Activated CD4-positive, alpha-beta T cell treated with anti-CD3 and anti-CD28 coated beads for 36 hours (primary cell): ENCODE measurements at regions of chr14 and their contacts with region 1.

Region 1: DNA sequence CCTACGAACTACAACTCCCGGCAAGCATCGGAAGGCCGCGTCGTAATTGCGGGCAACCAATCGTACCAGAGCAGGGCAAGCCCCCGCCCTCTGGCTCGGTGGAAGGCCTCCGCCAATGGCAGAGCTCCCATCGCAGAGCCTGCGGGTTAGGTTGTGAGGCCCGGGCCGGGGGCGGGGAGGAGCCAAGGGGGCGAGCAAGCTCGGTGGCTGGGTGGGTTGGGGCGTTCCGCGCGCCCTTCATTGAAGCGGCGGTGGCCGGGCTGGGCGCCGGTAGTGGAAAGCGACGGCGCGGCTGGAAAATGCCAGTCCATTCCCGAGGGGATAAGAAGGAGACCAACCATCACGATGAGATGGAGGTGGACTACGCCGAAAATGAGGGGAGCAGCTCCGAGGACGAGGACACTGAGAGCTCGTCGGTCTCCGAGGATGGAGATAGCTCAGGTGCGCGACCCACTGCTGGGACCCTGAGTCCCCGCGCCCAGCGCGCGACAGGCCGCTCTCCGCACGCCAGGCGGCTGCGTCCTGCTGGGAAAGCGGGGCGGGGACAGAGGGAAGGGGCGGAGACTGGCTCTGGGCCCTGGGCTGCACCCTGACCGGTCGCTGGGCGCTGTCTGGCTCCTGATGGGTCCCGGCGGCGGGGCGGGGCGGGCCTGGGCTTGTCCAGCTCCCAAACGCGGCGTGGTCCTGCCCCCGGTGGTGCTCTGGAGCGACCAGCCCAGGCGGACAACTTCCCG is at the start of gene BRMS1L:
- DNase-seq: peak; percentile 99
- ATAC-seq: peak; percentile 98
- H3K4me3 Mint-ChIP-seq: peak within 1 kb of the TSS; percentile 71
- H3K27ac Mint-ChIP-seq: peak within 1 kb of the TSS; percentile 90
- H3K4me1 Mint-ChIP-seq: peaks cover 24% of the 10 kb centered on the region
- H3K27me3 Mint-ChIP-seq: no peaks in the 10 kb centered on the region
- total RNA-seq, gene BRMS1L: 5.3 to 7.8 TPM

Region 2: GRCh38 chr14:34461334-34462131 is 1364.9 kb before region 1 on chr14:
- CTCF ChIA-PET with region 1: no interaction called
- POLR2A ChIA-PET with region 1: no interaction called
- intact Hi-C with region 1: loop called in 1 of 2 experiments (anchors 1 kb)
- DNase-seq: peak; percentile 50
- ATAC-seq: peak; percentile 62
- H3K4me3 Mint-ChIP-seq: peak overlapping the region; percentile 91
- H3K27ac Mint-ChIP-seq: peak overlapping the region; percentile 85
- H3K4me1 Mint-ChIP-seq: peaks cover 19% of the 10 kb centered on the region
- H3K27me3 Mint-ChIP-seq: no peaks in the 10 kb centered on the region

Region 3: DNA sequence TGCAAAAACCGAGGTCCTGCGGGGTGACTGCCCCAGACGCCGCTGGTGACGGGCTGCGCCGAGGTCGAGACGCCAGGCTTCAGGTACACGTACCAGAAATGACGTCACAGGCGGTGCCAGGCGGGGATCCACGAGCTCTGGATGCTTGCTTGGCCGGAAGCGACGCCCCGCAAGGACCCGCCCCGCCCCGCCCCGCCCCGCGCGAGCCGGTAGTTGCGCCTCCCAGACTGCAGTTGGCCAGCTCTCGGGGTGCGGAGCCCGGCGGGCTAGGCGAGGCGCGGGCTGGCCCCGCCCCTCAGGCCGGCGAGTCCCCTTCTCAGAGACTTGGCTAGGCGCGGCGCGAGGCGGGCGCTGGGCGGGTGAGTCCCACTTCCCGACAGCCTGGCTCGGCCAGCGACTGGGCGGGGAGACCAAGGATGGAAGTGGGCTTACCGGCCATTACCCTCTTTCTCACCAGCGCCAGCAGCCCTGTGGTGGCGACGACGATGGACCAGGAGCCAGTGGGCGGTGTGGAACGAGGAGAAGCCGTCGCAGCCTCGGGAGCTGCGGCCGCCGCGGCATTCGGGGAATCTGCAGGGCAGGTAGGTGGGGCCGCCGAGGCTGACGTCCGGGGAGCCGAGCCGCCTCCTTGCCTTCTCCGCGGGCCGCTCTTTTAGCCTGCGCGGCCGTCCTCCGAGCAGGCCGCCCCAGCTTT is 780.2 kb before region 1 on chr14 and contains the start of gene FAM177A1:
- CTCF ChIA-PET with region 1: no interaction called
- POLR2A ChIA-PET with region 1: no interaction called
- intact Hi-C with region 1: loop called in 1 of 2 experiments (anchors 1 kb)
- DNase-seq: peak; percentile 100
- ATAC-seq: peak; percentile 94
- H3K4me3 Mint-ChIP-seq: peak within 1 kb of the TSS; percentile 95
- H3K27ac Mint-ChIP-seq: peak within 1 kb of the TSS; percentile 99
- H3K4me1 Mint-ChIP-seq: peaks cover 23% of the 10 kb centered on the region
- H3K27me3 Mint-ChIP-seq: no peaks in the 10 kb centered on the region
- total RNA-seq, gene FAM177A1: 35.4 to 37.2 TPM

Region 4: DNA sequence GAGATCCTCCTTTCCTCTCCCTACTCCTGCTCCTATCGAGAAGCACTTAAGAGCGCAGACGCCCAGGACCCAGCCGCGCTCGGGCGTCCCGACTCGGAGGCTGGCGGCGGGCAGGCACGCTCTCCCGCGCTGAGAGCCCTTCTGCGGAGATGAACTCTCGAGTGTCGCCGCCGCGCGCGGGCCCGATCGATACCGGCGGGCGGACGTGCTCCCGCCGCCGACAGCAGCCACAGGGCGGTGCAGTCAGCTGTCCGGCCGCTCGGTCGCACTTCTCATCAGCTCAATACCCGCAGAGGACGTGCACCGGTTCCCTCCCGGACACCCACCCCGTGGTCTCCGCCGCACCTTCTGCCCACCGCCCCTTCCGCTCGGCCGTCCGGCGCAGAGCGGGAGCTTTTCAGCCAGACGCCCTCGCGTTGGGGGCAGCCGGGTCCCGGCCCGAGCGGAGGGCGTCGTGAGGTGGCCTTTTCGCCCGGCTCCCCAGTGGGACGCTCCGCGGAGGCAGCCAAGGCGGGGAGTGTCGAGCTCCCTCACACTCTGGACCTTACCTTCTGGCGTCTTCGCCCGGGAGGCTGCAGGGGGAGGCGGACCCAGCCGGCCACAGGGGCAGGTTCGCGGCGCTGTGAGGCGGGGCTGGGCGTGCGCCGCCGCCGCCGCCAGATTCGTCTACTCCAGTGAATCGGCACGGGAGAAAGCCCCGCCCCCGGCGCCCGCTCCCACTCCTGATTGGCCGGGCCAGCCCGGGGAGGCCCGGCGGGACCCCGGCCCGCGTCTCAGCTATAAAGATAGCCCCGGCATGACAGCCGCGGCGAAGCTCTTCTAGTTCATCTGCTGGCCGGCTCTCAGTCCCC is 292.8 kb before region 1 on chr14 and contains the start of gene INSM2:
- CTCF ChIA-PET with region 1: no interaction called
- POLR2A ChIA-PET with region 1: no interaction called
- intact Hi-C with region 1: loop called in 1 of 2 experiments (anchors 5 kb)
- DNase-seq: peak; percentile 85
- ATAC-seq: peak; percentile 81
- H3K4me3 Mint-ChIP-seq: peak within 1 kb of the TSS; percentile 69
- H3K27ac Mint-ChIP-seq: no peak within 1 kb of the TSS
- H3K4me1 Mint-ChIP-seq: peaks cover 15% of the 10 kb centered on the region
- H3K27me3 Mint-ChIP-seq: peaks cover 44% of the 10 kb centered on the region
- total RNA-seq, gene INSM2: not detected

Region 5: DNA sequence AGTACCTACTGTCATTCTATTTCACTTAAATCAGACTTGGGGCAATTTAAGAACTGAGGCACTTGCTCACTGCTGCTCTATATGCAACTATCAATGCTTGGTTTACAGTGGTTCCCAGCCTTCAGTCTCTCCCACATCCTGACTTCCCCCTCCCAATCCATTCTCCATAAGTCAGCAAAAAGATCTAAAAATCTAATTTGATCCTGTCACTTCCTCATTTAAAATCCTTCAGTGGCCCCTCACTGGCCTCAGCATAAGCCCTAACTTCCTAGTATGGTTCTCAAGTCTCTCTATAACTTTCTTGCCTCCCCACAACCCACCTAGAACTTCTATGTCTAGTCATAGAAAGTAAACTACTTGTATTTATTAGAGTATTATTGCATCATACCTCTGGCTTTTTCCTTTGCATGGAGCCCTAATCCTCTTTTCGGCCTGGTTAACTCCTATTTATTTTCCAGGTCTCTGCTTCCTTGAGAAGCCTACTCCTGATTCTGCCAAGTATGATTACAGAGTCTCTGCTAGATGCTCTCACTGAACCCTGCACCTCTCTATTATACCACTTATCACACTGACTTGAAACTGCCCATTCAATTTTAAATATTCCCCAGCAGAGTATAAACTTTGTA is 147.9 kb before region 1 on chr14:
- CTCF ChIA-PET with region 1: no interaction called
- POLR2A ChIA-PET with region 1: no interaction called
- intact Hi-C with region 1: no loop called
- DNase-seq: no peak
- ATAC-seq: no peak
- H3K4me3 Mint-ChIP-seq: no peak overlapping the region
- H3K27ac Mint-ChIP-seq: no peak overlapping the region
- H3K4me1 Mint-ChIP-seq: no peaks in the 10 kb centered on the region
- H3K27me3 Mint-ChIP-seq: no peaks in the 10 kb centered on the region

Region 6: DNA sequence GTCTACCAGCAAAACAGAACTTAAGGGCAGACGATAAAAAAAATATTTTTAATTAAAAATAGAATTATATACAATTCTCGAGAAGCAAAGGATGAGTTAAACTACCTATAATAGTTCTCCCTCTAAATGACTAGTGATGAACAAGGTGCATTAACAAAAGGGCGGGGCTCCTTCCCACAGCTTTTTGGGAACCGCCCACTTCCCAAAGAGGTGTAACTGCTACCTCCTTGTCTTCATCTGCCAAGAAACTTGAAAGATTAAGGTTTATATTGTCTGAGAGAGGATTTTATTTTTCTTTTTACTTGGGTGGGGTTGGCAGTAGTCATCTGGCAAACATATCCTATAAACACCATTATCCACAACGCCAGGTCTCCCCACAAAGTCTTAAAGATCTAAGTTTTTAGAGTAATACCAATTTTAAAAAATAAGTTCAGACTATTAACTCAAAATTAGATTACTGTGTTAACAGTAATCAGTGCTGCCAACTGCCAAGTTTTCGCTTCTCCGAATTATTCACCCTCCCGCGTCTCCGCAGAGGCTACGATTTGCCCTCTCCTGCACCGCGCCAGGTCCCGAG is 18.2 kb before region 1 on chr14:
- CTCF ChIA-PET with region 1: interaction called, 10 read pairs
- POLR2A ChIA-PET with region 1: interaction called, 5 read pairs
- intact Hi-C with region 1: loop called (anchors 1 kb)
- DNase-seq: peak; percentile 54
- ATAC-seq: no peak
- H3K4me3 Mint-ChIP-seq: peak overlapping the region; percentile 95
- H3K27ac Mint-ChIP-seq: peak overlapping the region; percentile 97
- H3K4me1 Mint-ChIP-seq: peaks cover 24% of the 10 kb centered on the region
- H3K27me3 Mint-ChIP-seq: no peaks in the 10 kb centered on the region

Region 7: DNA sequence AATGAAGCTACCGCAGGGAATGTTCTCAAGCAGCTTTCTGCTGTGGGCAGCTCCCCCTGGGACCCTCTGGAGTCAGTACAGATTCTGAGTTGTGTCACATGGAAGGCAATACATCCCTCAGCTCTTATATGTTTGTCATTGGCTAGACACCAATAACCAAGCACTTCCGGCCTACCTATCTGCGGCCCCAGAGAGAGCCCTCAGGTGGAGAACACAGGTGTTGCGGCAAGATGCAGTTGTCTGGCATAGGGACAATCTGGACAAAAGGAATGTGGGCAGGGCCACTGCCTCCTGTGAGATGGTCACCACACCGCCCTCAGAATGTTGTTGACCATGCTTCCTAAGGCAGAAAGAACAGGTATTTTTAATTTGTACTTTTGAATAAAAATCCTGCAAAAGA is 118.5 kb after region 1 on chr14:
- CTCF ChIA-PET with region 1: no interaction called
- POLR2A ChIA-PET with region 1: no interaction called
- intact Hi-C with region 1: loop called in 1 of 2 experiments (anchors 5 kb)
- DNase-seq: peak; percentile 59
- ATAC-seq: peak; percentile 49
- H3K4me3 Mint-ChIP-seq: no peak overlapping the region
- H3K27ac Mint-ChIP-seq: no peak overlapping the region
- H3K4me1 Mint-ChIP-seq: peaks cover 2% of the 10 kb centered on the region
- H3K27me3 Mint-ChIP-seq: no peaks in the 10 kb centered on the region

Region 8: DNA sequence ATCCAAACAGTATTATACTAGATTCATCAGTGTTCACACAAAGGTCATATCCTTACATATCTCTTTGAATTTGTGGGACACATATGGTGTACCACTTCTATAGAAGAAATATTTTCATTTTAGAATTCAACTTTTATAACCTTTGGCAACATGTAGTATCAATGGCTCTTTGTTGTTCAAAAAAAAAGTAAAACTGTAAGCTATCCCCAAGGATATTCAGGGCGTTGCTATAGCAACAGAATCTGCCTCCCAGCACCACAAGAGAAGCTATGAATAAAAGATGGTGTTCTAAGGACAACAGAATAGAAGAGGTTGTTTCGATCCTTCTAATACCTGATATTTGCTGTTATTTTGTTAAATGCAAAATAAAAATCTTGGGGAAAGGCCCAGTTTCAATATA is 139.0 kb after region 1 on chr14:
- CTCF ChIA-PET with region 1: no interaction called
- POLR2A ChIA-PET with region 1: no interaction called
- intact Hi-C with region 1: no loop called
- DNase-seq: no peak
- ATAC-seq: no peak
- H3K4me3 Mint-ChIP-seq: no peak overlapping the region
- H3K27ac Mint-ChIP-seq: no peak overlapping the region
- H3K4me1 Mint-ChIP-seq: no peaks in the 10 kb centered on the region
- H3K27me3 Mint-ChIP-seq: peaks cover 2% of the 10 kb centered on the region

Region 9: DNA sequence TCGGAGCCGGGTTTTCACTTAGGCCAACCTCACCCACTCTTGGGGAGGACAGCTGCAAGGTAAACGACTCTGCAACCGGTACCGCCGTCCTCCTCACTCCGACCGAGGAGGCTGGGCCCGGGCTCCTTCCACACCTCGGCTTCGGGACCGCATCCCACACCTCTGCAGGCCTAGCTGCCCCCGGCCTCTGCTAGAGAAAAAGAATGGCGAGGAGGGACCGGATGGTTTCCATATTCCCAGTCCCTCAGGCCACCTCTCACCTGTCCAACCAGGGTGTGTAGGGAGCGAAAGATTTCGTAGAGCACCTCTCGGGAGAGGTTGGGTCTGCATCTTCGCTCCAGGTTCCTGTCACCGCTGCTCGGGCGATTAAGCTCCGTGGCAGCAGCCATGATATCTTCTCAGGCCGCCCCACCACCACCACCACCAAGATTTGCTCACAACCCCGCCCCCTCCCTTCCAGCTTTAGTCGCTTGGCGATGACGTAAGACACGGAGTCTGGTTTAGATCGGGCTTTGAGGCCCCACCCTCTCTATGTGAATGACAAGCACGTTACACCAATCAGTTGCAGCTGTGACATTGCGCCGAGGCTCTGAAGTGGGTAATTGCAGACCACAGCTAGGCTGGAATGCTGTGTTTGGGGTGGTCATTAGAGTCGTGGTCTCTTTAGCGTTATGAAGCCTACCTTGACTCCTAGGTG is 494.0 kb after region 1 on chr14 and contains the start of gene MBIP:
- CTCF ChIA-PET with region 1: interaction called, 5 read pairs
- POLR2A ChIA-PET with region 1: no interaction called
- intact Hi-C with region 1: loop called (anchors 1 to 5 kb)
- DNase-seq: peak; percentile 95
- ATAC-seq: peak; percentile 95
- H3K4me3 Mint-ChIP-seq: peak within 1 kb of the TSS; percentile 85
- H3K27ac Mint-ChIP-seq: peak within 1 kb of the TSS; percentile 94
- H3K4me1 Mint-ChIP-seq: peaks cover 29% of the 10 kb centered on the region
- H3K27me3 Mint-ChIP-seq: peaks cover 10% of the 10 kb centered on the region
- total RNA-seq, gene MBIP: 32.8 to 33.0 TPM